ENCODE measurements at regions of chr15 and their contacts with region 1.

Region 1: DNA sequence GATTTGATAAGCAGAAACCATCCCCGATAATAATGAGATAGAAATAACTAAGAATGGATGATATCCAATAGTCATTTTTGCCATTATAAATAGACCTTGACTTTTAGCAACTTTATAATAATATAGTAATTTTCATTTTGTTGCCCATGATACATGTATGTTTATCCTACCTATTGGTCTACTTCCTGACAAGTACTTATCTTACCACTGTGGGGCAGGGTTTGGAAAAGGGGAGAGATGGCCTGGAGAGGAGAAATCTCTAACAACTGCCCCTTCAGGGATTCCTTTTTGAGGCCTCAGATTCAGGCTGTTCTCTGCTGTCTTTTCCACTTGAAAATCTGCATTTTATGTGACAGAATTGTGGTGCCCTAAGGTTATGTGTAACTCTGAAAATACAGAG is 42.2 kb downstream of the FAM98B start:
- DNase-seq: no peak
- ATAC-seq: no peak
- H3K4me3 ChIP-seq: no peak overlapping the region
- H3K4me3 Mint-ChIP-seq: no peak overlapping the region
- H3K27ac ChIP-seq: no peak overlapping the region
- H3K27ac Mint-ChIP-seq: peak overlapping the region; percentile 76
- H3K4me1 ChIP-seq: no peaks in the 10 kb centered on the region
- H3K4me1 Mint-ChIP-seq: peaks cover 36% of the 10 kb centered on the region
- H3K27me3 ChIP-seq: no peaks in the 10 kb centered on the region
- H3K27me3 Mint-ChIP-seq: no peaks in the 10 kb centered on the region
- CTCF ChIP-seq: no peak

Region 2: GRCh38 chr15:38547255-38547997 is 51.3 kb after region 1 on chr15:
- CTCF ChIA-PET with region 1: no interaction called
- POLR2A ChIA-PET with region 1: no interaction called
- intact Hi-C with region 1: loop called in 1 of 2 experiments (anchors 5 kb)
- DNase-seq: peak in 3 of 14 experiments; percentile 32 to 55 (median 43)
- ATAC-seq: peak; percentile 27
- H3K4me3 ChIP-seq: no peak overlapping the region
- H3K4me3 Mint-ChIP-seq: peak overlapping the region; percentile 66
- H3K27ac ChIP-seq: no peak overlapping the region
- H3K27ac Mint-ChIP-seq: peak overlapping the region; percentile 80
- H3K4me1 ChIP-seq: peaks cover 38% of the 10 kb centered on the region
- H3K4me1 Mint-ChIP-seq: peaks cover 91% of the 10 kb centered on the region
- H3K27me3 ChIP-seq: no peaks in the 10 kb centered on the region
- H3K27me3 Mint-ChIP-seq: no peaks in the 10 kb centered on the region
- CTCF ChIP-seq: no peak